A673 (cell line): ENCODE measurements at regions of chr16 and their contacts with region 1.

Region 1: DNA sequence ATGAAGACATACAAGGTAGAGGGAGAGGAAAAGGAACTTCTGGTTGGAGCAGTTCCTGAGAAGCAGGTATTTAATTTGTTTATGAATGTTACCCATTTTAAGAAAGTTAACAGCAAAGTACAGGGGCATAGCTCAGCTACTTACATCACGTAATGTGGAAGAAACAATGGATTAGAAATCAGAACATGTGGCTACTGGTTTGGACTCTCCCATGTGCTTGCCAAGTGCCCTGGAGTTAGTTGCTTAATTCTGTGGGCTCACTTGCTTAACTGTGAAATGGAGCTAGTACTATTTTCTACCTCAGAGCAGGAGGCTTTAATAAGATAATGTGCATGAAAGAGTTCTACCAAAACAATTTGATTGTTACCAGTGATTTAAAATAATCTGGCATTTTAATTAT is 27.3 kb downstream of the RSPRY1 start:
- DNase-seq: no peak
- H3K4me3 ChIP-seq: no peak overlapping the region
- H3K27ac ChIP-seq: no peak overlapping the region
- H3K4me1 ChIP-seq: no peaks in the 10 kb centered on the region
- H3K27me3 ChIP-seq: no peaks in the 10 kb centered on the region
- CTCF ChIP-seq: no peak

Region 2: DNA sequence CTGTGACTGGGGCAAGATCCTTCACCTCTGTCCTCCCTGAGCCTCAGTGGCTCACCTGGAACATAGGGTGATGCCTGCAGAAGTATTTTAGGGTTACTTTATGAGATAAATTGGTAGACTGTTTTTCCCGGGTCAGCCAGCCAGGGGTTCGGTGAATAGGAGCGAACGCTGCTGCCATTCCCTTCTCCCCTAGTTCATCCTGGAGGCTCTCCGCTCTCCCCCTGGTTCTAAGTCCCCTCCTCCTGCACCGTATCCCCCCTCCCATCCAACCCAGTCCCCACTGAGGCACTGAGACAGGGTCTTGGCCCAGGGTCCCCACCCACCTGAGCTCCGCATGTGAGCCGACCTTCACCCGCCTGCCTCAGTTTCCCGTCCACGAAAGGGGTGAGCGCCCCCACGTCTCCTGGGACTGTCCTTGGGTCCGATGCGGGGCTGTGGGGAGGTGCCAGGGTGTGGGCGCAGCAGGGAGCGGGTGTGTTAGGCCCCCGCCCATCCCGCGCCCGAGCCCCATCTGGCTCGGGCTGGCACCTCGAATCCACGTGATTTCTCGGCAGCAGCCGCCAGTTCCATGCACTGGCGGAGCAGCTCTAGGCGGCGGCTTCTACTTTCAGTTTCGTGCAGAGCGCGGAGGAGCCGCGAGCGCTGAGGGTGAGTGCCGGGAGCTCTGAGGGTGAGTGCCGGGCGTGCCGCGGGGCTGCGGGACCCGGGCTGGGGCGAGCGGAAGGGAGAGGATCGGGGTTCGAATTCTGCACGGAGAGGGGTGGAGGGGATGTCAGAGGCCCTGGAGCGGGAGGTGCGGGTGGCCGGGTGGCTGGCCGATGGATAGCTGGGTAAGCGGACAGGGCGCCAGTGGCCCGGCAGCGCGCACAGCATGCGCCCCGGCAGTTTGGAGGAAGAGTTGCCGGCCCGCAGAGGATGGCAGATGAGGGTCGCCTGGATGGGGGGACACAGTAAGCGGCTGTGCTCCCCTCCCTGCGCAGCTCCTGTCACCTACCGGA is 224.2 kb before region 1 on chr16 and contains the start of gene NLRC5:
- CTCF ChIA-PET with region 1: no interaction called
- POLR2A ChIA-PET with region 1: no interaction called
- intact Hi-C with region 1: no loop called
- DNase-seq: peak; percentile 91
- H3K4me3 ChIP-seq: peak within 1 kb of the TSS; percentile 60
- H3K27ac ChIP-seq: peak within 1 kb of the TSS; percentile 53
- H3K4me1 ChIP-seq: peaks cover 12% of the 10 kb centered on the region
- H3K27me3 ChIP-seq: no peaks in the 10 kb centered on the region
- CTCF ChIP-seq: no peak
- total RNA-seq, gene NLRC5: 13.1 and 14.2 TPM in 2 replicates

Region 3: GRCh38 chr16:57091975-57092785 is 121.3 kb before region 1 on chr16 and contains the start of gene CPNE2:
- CTCF ChIA-PET with region 1: interaction called, 10 read pairs
- POLR2A ChIA-PET with region 1: no interaction called
- intact Hi-C with region 1: no loop called
- DNase-seq: peak; percentile 84
- H3K4me3 ChIP-seq: peak within 1 kb of the TSS; percentile 80
- H3K27ac ChIP-seq: peak within 1 kb of the TSS; percentile 72
- H3K4me1 ChIP-seq: peaks cover 15% of the 10 kb centered on the region
- H3K27me3 ChIP-seq: no peaks in the 10 kb centered on the region
- CTCF ChIP-seq: no peak
- total RNA-seq, gene CPNE2: 38.1 and 43.6 TPM in 2 replicates

Region 4: DNA sequence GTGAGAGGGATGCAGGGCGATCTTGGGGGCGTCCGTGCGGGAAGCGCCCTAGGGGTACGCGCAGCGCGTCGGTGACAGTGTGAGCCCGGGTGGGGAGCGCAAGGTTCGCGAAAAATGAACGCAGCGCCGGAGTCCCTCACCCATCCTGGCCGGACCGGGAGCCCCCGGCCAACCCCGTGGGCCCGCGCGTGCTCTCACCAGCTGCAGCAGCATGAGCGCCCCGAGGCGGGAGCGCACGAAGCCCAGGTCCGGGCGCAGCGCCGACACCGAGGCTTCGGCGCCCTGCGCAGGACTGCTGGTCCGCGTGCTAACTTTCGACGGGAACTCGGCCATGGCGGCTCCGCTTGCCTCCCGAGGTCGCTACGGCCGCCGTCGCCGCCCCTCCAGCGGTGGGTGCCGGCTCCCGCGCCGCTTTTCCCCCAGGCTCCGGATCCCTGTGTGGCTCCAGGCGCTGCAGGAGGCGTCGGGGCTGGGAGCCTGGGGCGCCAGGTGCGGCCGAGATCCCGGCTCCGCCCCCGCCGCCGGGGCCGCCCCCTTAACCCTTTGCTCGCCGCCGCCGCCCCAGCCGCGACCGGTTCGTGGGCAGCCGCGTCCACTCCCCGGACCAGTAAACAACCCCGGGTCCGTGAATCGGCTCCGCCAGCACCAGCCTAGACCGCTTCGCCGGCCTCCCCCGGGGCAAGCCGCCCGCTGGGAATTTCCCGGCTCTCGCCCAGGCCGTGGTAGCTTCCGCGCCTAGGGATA is 70.9 kb after region 1 on chr16 and contains the start of gene PLLP:
- CTCF ChIA-PET with region 1: no interaction called
- POLR2A ChIA-PET with region 1: no interaction called
- intact Hi-C with region 1: no loop called
- DNase-seq: peak; percentile 54
- H3K4me3 ChIP-seq: peak within 1 kb of the TSS; percentile 54
- H3K27ac ChIP-seq: no peak within 1 kb of the TSS
- H3K4me1 ChIP-seq: no peaks in the 10 kb centered on the region
- H3K27me3 ChIP-seq: no peaks in the 10 kb centered on the region
- CTCF ChIP-seq: no peak
- total RNA-seq, gene PLLP: 1.1 and 1.5 TPM in 2 replicates